ENCODE measurements at regions of chr3 and their contacts with region 1.

Region 1: DNA sequence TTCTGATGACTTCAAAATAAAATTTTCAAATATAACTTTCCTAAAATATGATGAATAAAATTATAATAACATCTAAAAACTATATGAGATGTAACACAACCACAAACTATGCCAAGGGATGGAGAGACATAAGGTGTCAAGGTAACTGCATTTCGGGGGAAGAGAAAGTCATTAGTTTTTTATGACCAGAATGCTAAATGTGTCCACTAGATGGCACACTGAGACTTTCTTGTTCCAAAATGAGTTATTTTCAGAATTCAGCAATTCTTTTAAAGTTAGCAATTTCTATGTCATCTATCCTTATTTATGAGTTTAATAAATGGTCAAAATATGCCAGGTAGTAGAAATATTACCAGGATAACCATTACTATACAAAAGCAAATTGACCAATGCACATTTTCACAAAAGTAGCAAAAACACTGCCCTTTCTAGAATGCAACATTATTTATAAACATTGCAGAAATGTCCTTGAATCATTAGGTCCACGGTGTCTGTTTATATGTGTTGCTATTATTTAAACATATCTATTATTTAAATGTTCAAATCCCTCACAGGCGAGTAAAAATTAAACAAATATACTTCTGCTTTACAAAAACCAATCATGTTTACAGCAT is 374.2 kb downstream of the PLCL2 start:
- DNase-seq: peak in 1 of 2 donors; percentile 72
- H3K4me3 ChIP-seq: no peak overlapping the region
- H3K27ac ChIP-seq: no peak overlapping the region
- H3K4me1 ChIP-seq: peaks cover 0 to 7% (median 0%) of the 10 kb centered on the region in 4 donors
- H3K27me3 ChIP-seq: no peaks in the 10 kb centered on the region
- CTCF ChIP-seq: peak in 5 of 7 experiments; percentile 35 to 69 (median 61)
- EP300 ChIP-seq: no peak
- POLR2A ChIP-seq: no peak

Region 2: DNA sequence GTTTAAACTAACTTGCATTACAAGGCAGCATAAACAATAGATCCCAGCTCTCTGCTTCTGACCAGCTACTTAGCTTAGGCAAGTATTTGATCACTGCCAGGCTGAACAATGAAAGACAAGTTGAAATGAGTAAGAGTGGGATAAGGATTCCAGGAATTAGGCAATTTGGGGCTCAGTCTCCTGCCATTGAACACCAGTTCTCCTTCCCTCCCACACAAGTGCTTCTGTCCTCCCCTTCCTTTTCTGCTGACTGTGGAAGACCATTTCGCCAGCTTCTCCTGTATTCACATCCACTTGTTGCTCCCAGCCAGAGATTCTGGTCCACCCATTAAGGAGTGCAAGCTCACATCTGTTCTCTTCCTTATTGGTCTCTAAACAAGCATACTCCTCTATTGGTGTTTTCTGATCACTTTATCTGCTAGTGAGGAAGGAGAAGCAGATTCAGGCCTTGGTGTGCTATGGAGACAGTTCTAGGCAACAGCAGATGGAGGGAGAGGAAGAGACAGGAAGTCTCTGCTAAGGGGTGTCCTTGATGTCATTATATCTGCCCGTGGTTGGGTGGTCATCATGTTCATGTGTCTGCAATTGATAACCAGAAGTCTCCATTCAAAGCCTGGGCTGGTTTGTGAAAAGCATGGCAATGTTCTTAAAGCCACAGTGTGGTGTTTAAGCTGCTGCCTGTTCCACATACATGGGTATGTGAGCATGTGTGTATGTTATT is 252.6 kb before region 1 on chr3:
- intact Hi-C with region 1: no loop called
- DNase-seq: no peak
- H3K4me3 ChIP-seq: no peak overlapping the region
- H3K27ac ChIP-seq: no peak overlapping the region
- H3K4me1 ChIP-seq: peaks cover 0 to 13% (median 8%) of the 10 kb centered on the region in 4 donors
- H3K27me3 ChIP-seq: no peaks in the 10 kb centered on the region
- CTCF ChIP-seq: no peak
- EP300 ChIP-seq: no peak
- POLR2A ChIP-seq: no peak

Region 3: GRCh38 chr3:17115186-17115585 is 143.7 kb before region 1 on chr3:
- intact Hi-C with region 1: no loop called
- DNase-seq: no peak
- H3K4me3 ChIP-seq: no peak overlapping the region
- H3K27ac ChIP-seq: no peak overlapping the region
- H3K4me1 ChIP-seq: no peaks in the 10 kb centered on the region
- H3K27me3 ChIP-seq: no peaks in the 10 kb centered on the region
- CTCF ChIP-seq: no peak
- EP300 ChIP-seq: no peak
- POLR2A ChIP-seq: no peak

Region 4: DNA sequence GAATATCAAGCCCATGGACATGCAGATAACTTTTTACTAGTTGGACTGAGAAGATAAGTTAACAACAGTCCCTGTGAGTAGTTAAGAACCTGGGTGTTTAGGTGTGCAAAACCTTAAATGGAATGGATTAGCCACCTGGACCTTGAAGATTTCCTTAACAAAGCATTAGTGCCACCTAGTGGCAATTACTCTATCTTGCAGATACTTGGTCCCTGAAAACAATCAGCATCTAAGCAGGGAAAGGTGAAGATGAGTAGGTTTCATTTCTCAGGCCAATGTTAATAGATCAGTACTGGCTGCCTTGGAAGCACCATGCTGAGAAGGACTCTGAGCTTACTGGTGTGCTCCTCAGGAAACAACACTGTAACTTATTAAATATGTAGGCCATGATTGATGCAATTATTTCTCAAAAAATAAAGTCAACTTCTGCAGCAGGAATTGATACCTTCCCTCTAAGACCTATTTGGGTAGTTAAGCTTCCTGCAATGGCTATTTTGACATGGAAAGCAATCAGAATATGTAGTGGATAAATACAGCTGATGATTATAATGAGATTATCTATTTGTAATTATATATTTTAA is 154.1 kb after region 1 on chr3:
- intact Hi-C with region 1: loop called (anchors 10 kb)
- DNase-seq: peak in 1 of 2 donors; percentile 70
- H3K4me3 ChIP-seq: no peak overlapping the region
- H3K27ac ChIP-seq: no peak overlapping the region
- H3K4me1 ChIP-seq: no peaks in the 10 kb centered on the region
- H3K27me3 ChIP-seq: no peaks in the 10 kb centered on the region
- CTCF ChIP-seq: peak in 5 of 7 experiments; percentile 55 to 76 (median 72)
- EP300 ChIP-seq: no peak
- POLR2A ChIP-seq: no peak

Region 5: DNA sequence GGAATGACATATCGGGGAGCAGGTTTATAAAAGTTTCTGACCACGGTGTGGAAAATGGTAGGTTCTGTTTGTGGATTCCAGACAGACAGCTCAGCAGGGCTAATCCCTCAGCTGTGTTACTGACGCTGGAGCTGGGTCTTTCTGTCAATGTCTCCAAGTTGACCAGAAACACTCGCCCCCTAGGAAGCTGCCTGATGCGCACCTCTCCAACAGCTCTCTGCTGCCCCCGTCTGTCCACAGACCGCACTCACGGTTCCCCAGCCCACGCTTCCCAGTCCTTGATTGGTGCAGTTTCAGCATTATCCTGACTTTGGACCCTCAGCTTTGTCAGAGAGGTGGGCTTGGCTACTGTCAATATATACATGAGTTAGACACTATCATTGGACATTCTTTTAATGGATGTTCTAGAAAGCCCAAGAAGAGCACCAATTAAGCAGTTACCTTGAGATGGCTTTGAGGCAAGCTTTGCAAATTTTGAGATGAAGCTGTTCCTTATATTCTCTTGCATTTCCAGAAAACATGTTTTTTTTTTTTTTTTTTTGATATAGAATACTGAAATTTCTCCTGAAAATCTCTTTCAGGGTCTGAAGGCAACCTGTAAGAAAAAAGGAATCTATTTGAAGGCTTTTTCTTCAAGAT is 582.4 kb after region 1 on chr3:
- intact Hi-C with region 1: loop called (anchors 10 kb)
- DNase-seq: peak; percentile 74 to 86
- H3K4me3 ChIP-seq: no peak overlapping the region
- H3K27ac ChIP-seq: no peak overlapping the region
- H3K4me1 ChIP-seq: peaks cover 0 to 4% (median 1%) of the 10 kb centered on the region in 4 donors
- H3K27me3 ChIP-seq: peaks cover 0 to 3% (median 0%) of the 10 kb centered on the region in 3 donors
- CTCF ChIP-seq: peak in 5 of 7 experiments; percentile 82 to 89 (median 85)
- EP300 ChIP-seq: no peak
- POLR2A ChIP-seq: no peak

Measured in stomach (tissue), 19 donors.